Spleen (tissue), 13 donors: ENCODE measurements at regions of chr3 and their contacts with region 1.

Region 1: DNA sequence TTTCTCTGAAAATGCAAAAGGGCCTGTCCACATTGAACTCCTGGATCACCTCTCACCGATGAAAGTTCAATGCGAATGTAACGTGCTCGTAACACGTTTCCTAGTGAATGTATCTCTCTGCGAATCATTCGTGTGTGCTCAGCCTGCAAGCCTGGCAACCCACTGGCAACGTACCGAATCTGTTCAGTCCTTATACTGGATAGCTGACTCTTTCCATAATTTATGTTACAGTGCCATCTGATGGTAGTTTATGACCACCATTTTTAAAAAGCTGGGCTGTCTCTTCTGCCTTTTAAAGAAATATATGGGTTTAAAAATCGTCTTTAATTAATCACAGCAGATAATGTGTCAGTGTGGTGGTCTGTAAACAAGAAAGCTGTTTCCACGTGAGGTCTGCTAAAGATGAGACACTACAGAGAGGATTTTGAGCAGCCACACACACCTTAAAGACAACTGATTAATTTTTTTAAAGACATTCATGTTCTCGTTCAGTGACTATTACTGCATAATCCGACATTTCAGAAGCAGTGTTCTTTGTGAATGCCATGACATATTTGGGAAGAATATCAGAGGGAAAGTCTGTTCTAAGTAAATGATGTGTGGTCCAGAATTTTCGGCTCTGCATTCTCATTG is 69.4 kb upstream of the FOXP1 start:
- DNase-seq: no peak
- H3K4me3 ChIP-seq: no peak overlapping the region
- H3K27ac ChIP-seq: no peak overlapping the region
- H3K4me1 ChIP-seq: peaks cover 0 to 16% (median 2%) of the 10 kb centered on the region in 6 donors
- H3K27me3 ChIP-seq: no peaks in the 10 kb centered on the region
- CTCF ChIP-seq: peak in 9 of 11 experiments; percentile 17 to 62 (median 41)
- POLR2A ChIP-seq: no peak

Region 2: GRCh38 chr3:70064194-70064779 is 1588.6 kb before region 1 on chr3:
- intact Hi-C with region 1: loop called (anchors 10 kb)
- DNase-seq: no peak
- H3K4me3 ChIP-seq: no peak overlapping the region
- H3K27ac ChIP-seq: no peak overlapping the region
- H3K4me1 ChIP-seq: no peaks in the 10 kb centered on the region
- H3K27me3 ChIP-seq: peaks cover 0 to 19% (median 0%) of the 10 kb centered on the region in 7 donors
- CTCF ChIP-seq: peak in 8 of 11 experiments; percentile 15 to 57 (median 48)
- POLR2A ChIP-seq: no peak

Region 3: GRCh38 chr3:71785532-71786216 is 132.8 kb after region 1 on chr3:
- intact Hi-C with region 1: no loop called
- DNase-seq: no peak
- H3K4me3 ChIP-seq: peak overlapping the region in 7 of 8 donors; percentile 24 to 69 (median 41)
- H3K27ac ChIP-seq: peak overlapping the region in 5 of 8 donors; percentile 23 to 88 (median 85)
- H3K4me1 ChIP-seq: peaks cover 10 to 35% (median 19%) of the 10 kb centered on the region in 6 donors
- H3K27me3 ChIP-seq: peaks cover 0 to 68% (median 53%) of the 10 kb centered on the region in 7 donors
- CTCF ChIP-seq: no peak
- POLR2A ChIP-seq: no peak